Natural killer cell (primary cell): ENCODE measurements at regions of chr22 and their contacts with region 1.

Region 1: GRCh38 chr22:39960791-39961746 is 872 bp downstream of the TMA7B start:
- DNase-seq: peak; percentile 69 to 81
- ATAC-seq: peak; percentile 95 to 99 (median 98)
- H3K4me3 ChIP-seq: no peak overlapping the region
- H3K4me3 Mint-ChIP-seq: peak overlapping the region; percentile 86
- H3K27ac ChIP-seq: peak overlapping the region; percentile 63
- H3K27ac Mint-ChIP-seq: peak overlapping the region; percentile 72 to 87
- H3K4me1 ChIP-seq: peaks cover 65% of the 10 kb centered on the region
- H3K4me1 Mint-ChIP-seq: peaks cover 67 to 70% of the 10 kb centered on the region in 2 donors
- H3K27me3 ChIP-seq: no peaks in the 10 kb centered on the region
- H3K27me3 Mint-ChIP-seq: no peaks in the 10 kb centered on the region
- CTCF ChIP-seq: no peak

Region 2: GRCh38 chr22:39800790-39801520 is 160.1 kb before region 1 on chr22:
- intact Hi-C with region 1: no loop called
- DNase-seq: no peak
- ATAC-seq: no peak
- H3K4me3 ChIP-seq: no peak overlapping the region
- H3K4me3 Mint-ChIP-seq: no peak overlapping the region
- H3K27ac ChIP-seq: no peak overlapping the region
- H3K27ac Mint-ChIP-seq: no peak overlapping the region
- H3K4me1 ChIP-seq: no peaks in the 10 kb centered on the region
- H3K4me1 Mint-ChIP-seq: no peaks in the 10 kb centered on the region
- H3K27me3 ChIP-seq: peaks cover 2% of the 10 kb centered on the region
- H3K27me3 Mint-ChIP-seq: peaks cover 25 to 47% of the 10 kb centered on the region in 2 donors
- CTCF ChIP-seq: no peak

Region 3: DNA sequence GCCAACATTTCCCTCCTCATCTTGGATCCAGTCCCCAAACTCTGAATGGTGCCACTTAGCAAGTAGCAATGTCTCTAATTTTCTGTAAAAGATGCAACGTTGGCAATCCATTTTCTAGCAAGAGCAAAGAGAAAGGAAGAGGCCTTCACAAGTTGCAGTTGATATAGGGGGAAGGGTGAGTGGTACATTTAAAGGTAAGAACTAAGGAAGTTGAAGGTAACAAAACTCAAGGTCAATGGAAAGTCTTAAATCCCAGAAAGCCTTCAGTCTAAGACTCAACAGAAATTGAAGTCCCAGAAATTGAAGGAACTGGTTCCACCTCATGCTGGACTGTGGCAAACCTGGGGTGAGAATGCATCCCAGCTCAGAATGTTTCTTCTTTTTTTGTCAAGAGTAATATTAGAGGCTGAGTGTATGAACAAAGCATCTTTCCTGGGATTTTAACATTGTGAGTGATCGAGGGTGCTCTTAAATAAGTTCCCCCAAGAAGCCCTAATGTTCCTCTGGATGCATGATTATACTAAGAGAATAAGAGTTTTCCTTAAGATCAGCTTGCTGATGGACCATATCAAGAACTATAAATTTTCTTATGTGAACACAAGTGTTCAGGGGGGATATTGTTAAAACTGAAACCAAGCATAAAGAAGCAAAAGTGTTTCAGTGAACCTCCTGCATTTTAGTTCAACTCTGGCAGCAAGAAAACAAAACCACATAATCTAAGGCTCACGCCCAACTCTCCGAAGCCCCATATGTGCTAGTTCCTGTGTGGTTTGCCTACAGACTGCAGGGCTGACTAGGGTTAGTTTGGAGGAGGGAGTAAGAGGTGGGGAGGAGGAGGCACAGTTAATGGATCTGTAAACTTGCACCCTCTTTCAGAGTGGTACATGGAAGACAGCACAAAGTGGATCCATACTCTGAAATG is 60.5 kb before region 1 on chr22 and contains the start of gene GRAP2:
- intact Hi-C with region 1: loop called (anchors 1 kb)
- DNase-seq: peak; percentile 50 to 90
- ATAC-seq: peak; percentile 94 to 98 (median 96)
- H3K4me3 ChIP-seq: peak within 1 kb of the TSS; percentile 73
- H3K4me3 Mint-ChIP-seq: peak within 1 kb of the TSS; percentile 97
- H3K27ac ChIP-seq: peak within 1 kb of the TSS; percentile 82
- H3K27ac Mint-ChIP-seq: peak within 1 kb of the TSS; percentile 92 to 94
- H3K4me1 ChIP-seq: peaks cover 36% of the 10 kb centered on the region
- H3K4me1 Mint-ChIP-seq: peaks cover 51 to 58% of the 10 kb centered on the region in 2 donors
- H3K27me3 ChIP-seq: no peaks in the 10 kb centered on the region
- H3K27me3 Mint-ChIP-seq: no peaks in the 10 kb centered on the region
- CTCF ChIP-seq: no peak
- total RNA-seq, gene GRAP2: 65.1 to 97.3 (median 92.2) TPM

Region 4: GRCh38 chr22:39908737-39909136 is 52.3 kb before region 1 on chr22:
- intact Hi-C with region 1: loop called (anchors 2 kb)
- DNase-seq: peak in 1 of 2 donors; percentile 65
- ATAC-seq: peak; percentile 62 to 73 (median 69)
- H3K4me3 ChIP-seq: no peak overlapping the region
- H3K4me3 Mint-ChIP-seq: peak overlapping the region; percentile 61
- H3K27ac ChIP-seq: peak overlapping the region; percentile 45
- H3K27ac Mint-ChIP-seq: peak overlapping the region; percentile 78 to 92
- H3K4me1 ChIP-seq: peaks cover 62% of the 10 kb centered on the region
- H3K4me1 Mint-ChIP-seq: peaks cover 91 to 97% of the 10 kb centered on the region in 2 donors
- H3K27me3 ChIP-seq: no peaks in the 10 kb centered on the region
- H3K27me3 Mint-ChIP-seq: no peaks in the 10 kb centered on the region
- CTCF ChIP-seq: no peak

Region 5: GRCh38 chr22:39927544-39927943 is 33.5 kb before region 1 on chr22:
- intact Hi-C with region 1: loop called (anchors 5 kb)
- DNase-seq: peak in 1 of 2 donors; percentile 44
- ATAC-seq: no peak
- H3K4me3 ChIP-seq: no peak overlapping the region
- H3K4me3 Mint-ChIP-seq: peak overlapping the region; percentile 18
- H3K27ac ChIP-seq: no peak overlapping the region
- H3K27ac Mint-ChIP-seq: no peak overlapping the region
- H3K4me1 ChIP-seq: peaks cover 46% of the 10 kb centered on the region
- H3K4me1 Mint-ChIP-seq: peaks cover 34 to 37% of the 10 kb centered on the region in 2 donors
- H3K27me3 ChIP-seq: no peaks in the 10 kb centered on the region
- H3K27me3 Mint-ChIP-seq: no peaks in the 10 kb centered on the region
- CTCF ChIP-seq: no peak

Region 6: GRCh38 chr22:40009292-40009769 is 48.3 kb after region 1 on chr22:
- intact Hi-C with region 1: no loop called
- DNase-seq: no peak
- ATAC-seq: peak; percentile 21 to 73 (median 66)
- H3K4me3 ChIP-seq: no peak overlapping the region
- H3K4me3 Mint-ChIP-seq: peak overlapping the region; percentile 65
- H3K27ac ChIP-seq: no peak overlapping the region
- H3K27ac Mint-ChIP-seq: peak overlapping the region in 1 of 2 donors; percentile 19
- H3K4me1 ChIP-seq: peaks cover 16% of the 10 kb centered on the region
- H3K4me1 Mint-ChIP-seq: peaks cover 19 to 29% of the 10 kb centered on the region in 2 donors
- H3K27me3 ChIP-seq: peaks cover 18% of the 10 kb centered on the region
- H3K27me3 Mint-ChIP-seq: peaks cover 42 to 54% of the 10 kb centered on the region in 2 donors
- CTCF ChIP-seq: no peak